ENCODE measurements at regions of chr7 and their contacts with region 1.

Region 1: GRCh38 chr7:22782616-22783232 is 39.9 kb downstream of the TOMM7 start:
- DNase-seq: peak; percentile 88
- ATAC-seq: peak; percentile 84
- H3K4me3 Mint-ChIP-seq: no peak overlapping the region
- H3K27ac Mint-ChIP-seq: no peak overlapping the region
- H3K4me1 Mint-ChIP-seq: no peaks in the 10 kb centered on the region
- H3K27me3 Mint-ChIP-seq: peaks cover 2% of the 10 kb centered on the region
- CTCF ChIP-seq: peak; percentile 85

Region 2: GRCh38 chr7:21891291-21891690 is 891.4 kb before region 1 on chr7:
- CTCF ChIA-PET with region 1: no interaction called
- POLR2A ChIA-PET with region 1: no interaction called
- intact Hi-C with region 1: no loop called
- DNase-seq: no peak
- ATAC-seq: no peak
- H3K4me3 Mint-ChIP-seq: no peak overlapping the region
- H3K27ac Mint-ChIP-seq: no peak overlapping the region
- H3K4me1 Mint-ChIP-seq: no peaks in the 10 kb centered on the region
- H3K27me3 Mint-ChIP-seq: no peaks in the 10 kb centered on the region
- CTCF ChIP-seq: no peak

Region 3: GRCh38 chr7:22559829-22560489 is 222.8 kb before region 1 on chr7:
- CTCF ChIA-PET with region 1: interaction called, 103 read pairs
- POLR2A ChIA-PET with region 1: no interaction called
- intact Hi-C with region 1: loop called (anchors 5 kb)
- DNase-seq: peak; percentile 83
- ATAC-seq: peak; percentile 82
- H3K4me3 Mint-ChIP-seq: no peak overlapping the region
- H3K27ac Mint-ChIP-seq: no peak overlapping the region
- H3K4me1 Mint-ChIP-seq: peaks cover 25% of the 10 kb centered on the region
- H3K27me3 Mint-ChIP-seq: peaks cover 21% of the 10 kb centered on the region
- CTCF ChIP-seq: peak; percentile 90

Region 4: DNA sequence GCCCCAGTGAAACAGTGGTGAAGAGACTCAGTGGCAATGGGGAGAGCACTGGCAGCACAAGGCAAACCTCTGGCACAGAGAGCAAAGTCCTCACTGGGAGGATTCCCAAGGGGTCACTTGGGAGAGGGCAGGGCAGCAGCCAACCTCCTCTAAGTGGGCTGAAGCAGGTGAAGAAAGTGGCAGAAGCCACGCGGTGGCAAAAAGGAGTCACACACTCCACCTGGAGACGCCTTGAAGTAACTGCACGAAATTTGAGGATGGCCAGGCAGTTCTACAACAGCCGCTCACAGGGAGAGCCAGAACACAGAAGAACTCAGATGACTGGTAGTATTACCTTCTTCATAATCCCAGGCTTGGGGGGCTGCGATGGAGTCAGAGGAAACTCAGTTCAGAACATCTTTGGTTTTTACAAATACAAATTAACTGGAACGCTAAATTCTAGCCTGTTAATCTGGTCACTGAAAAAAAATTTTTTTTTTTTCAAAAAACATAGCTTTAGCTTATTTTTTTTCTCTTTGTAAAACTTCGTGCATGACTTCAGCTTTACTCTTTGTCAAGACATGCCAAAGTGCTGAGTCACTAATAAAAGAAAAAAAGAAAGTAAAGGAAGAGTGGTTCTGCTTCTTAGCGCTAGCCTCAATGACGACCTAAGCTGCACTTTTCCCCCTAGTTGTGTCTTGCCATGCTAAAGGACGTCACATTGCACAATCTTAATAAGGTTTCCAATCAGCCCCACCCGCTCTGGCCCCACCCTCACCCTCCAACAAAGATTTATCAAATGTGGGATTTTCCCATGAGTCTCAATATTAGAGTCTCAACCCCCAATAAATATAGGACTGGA is 56.2 kb before region 1 on chr7:
- CTCF ChIA-PET with region 1: interaction called, 32 read pairs
- POLR2A ChIA-PET with region 1: interaction called, 4 read pairs
- intact Hi-C with region 1: no loop called
- DNase-seq: peak; percentile 70
- ATAC-seq: peak; percentile 94
- H3K4me3 Mint-ChIP-seq: peak overlapping the region; percentile 25
- H3K27ac Mint-ChIP-seq: no peak overlapping the region
- H3K4me1 Mint-ChIP-seq: peaks cover 23% of the 10 kb centered on the region
- H3K27me3 Mint-ChIP-seq: peaks cover 46% of the 10 kb centered on the region
- CTCF ChIP-seq: peak; percentile 59

Region 5: DNA sequence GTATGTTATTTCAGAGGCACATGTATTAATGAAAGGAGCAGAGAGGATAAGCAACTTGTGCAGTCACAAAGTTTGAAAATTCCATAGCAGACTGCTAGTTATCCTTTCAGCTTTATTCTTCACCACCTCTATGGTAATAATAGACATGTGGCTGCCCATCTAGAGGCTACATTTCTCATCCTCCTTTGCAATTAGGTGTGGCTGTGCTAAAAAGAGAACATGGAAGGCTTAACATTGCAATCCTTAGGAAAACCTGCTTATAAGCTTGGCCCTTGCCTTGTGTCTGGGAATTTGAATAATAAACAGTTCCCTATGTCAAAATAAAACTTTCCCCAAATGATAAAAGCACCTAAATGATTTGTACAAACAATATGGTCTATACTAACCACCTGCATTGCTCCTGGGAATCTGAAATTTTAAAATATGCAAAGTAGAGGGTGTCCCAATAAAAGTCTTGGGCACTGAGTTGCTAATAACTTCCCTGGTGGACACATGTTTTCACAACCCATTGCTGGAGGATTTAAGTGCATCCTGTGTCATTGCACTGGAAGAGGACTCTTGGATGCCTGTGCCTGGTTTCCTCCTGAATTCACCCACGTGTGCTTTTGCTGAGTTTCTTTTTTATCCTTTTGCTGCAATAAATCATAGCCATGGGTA is 25.3 kb before region 1 on chr7:
- CTCF ChIA-PET with region 1: interaction called, 14 read pairs
- POLR2A ChIA-PET with region 1: no interaction called
- intact Hi-C with region 1: no loop called
- DNase-seq: no peak
- ATAC-seq: no peak
- H3K4me3 Mint-ChIP-seq: no peak overlapping the region
- H3K27ac Mint-ChIP-seq: no peak overlapping the region
- H3K4me1 Mint-ChIP-seq: no peaks in the 10 kb centered on the region
- H3K27me3 Mint-ChIP-seq: peaks cover 35% of the 10 kb centered on the region
- CTCF ChIP-seq: no peak

Region 6: DNA sequence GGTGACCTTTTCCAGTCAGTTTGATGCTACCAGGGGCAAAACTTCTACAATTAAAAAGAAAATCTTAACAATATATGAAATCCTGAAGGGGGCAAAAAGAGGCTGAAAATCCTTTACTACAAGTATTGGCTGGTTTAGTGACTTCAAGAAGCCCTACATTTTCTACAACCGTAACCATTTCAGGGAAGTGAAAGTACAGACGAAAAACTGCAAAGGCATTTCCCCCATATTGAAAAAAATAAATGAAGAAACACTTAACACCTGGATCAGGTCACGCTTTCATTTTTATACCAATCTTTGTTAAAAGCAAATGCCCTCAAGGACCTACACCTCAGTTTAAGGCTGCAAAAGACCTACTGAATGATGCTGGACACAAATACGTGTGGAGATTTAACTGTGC is 17.1 kb before region 1 on chr7:
- CTCF ChIA-PET with region 1: interaction called, 10 read pairs
- POLR2A ChIA-PET with region 1: no interaction called
- intact Hi-C with region 1: no loop called
- DNase-seq: no peak
- ATAC-seq: no peak
- H3K4me3 Mint-ChIP-seq: no peak overlapping the region
- H3K27ac Mint-ChIP-seq: no peak overlapping the region
- H3K4me1 Mint-ChIP-seq: no peaks in the 10 kb centered on the region
- H3K27me3 Mint-ChIP-seq: peaks cover 33% of the 10 kb centered on the region
- CTCF ChIP-seq: no peak

Region 7: GRCh38 chr7:22771194-22771871 is 11.4 kb before region 1 on chr7:
- CTCF ChIA-PET with region 1: interaction called, 10 read pairs
- POLR2A ChIA-PET with region 1: no interaction called
- intact Hi-C with region 1: no loop called
- DNase-seq: no peak
- ATAC-seq: no peak
- H3K4me3 Mint-ChIP-seq: no peak overlapping the region
- H3K27ac Mint-ChIP-seq: no peak overlapping the region
- H3K4me1 Mint-ChIP-seq: no peaks in the 10 kb centered on the region
- H3K27me3 Mint-ChIP-seq: peaks cover 27% of the 10 kb centered on the region
- CTCF ChIP-seq: no peak

Region 8: DNA sequence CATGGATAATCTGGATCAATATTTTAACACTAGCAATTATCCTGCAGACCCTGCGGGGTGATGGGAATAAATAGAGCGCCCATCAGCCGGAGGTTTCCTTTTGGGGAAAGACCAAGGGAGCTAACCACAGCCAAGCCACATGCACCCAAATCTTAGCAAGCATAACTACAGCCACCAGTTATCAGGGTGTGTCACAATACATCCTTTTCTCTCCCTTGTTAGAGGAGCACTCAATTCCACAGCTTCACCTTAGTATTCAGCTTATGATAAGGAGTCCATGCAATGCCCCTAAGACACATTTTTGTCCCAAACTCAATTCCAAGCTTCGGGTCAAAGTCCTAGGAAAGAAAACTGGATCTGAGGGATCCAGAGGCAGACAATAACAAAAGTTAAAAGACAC is 24.0 kb after region 1 on chr7:
- CTCF ChIA-PET with region 1: interaction called, 11 read pairs
- POLR2A ChIA-PET with region 1: no interaction called
- intact Hi-C with region 1: no loop called
- DNase-seq: no peak
- ATAC-seq: no peak
- H3K4me3 Mint-ChIP-seq: no peak overlapping the region
- H3K27ac Mint-ChIP-seq: no peak overlapping the region
- H3K4me1 Mint-ChIP-seq: no peaks in the 10 kb centered on the region
- H3K27me3 Mint-ChIP-seq: peaks cover 2% of the 10 kb centered on the region
- CTCF ChIP-seq: no peak